WTC11 (cell line): ENCODE measurements at regions of chr11 and their contacts with region 1.

Region 1: GRCh38 chr11:72030472-72031045 is 31.9 kb downstream of the IL18BP start:
- DNase-seq: no peak
- ATAC-seq: no peak
- H3K4me3 Mint-ChIP-seq: no peak overlapping the region
- H3K27ac Mint-ChIP-seq: no peak overlapping the region
- H3K4me1 Mint-ChIP-seq: peaks cover 2% of the 10 kb centered on the region; the same call in 1 of the 2 replicates
- H3K27me3 Mint-ChIP-seq: no peaks in the 10 kb centered on the region
- CTCF ChIP-seq: no peak

Region 2: GRCh38 chr11:71908218-71908617 is 122.3 kb before region 1 on chr11:
- CTCF ChIA-PET with region 1: no interaction called
- POLR2A ChIA-PET with region 1: no interaction called
- DNase-seq: no peak
- ATAC-seq: no peak
- H3K4me3 Mint-ChIP-seq: no peak overlapping the region
- H3K27ac Mint-ChIP-seq: no peak overlapping the region
- H3K4me1 Mint-ChIP-seq: peaks cover 2% of the 10 kb centered on the region; the same call in 1 of the 2 replicates
- H3K27me3 Mint-ChIP-seq: no peaks in the 10 kb centered on the region
- CTCF ChIP-seq: no peak

Region 3: DNA sequence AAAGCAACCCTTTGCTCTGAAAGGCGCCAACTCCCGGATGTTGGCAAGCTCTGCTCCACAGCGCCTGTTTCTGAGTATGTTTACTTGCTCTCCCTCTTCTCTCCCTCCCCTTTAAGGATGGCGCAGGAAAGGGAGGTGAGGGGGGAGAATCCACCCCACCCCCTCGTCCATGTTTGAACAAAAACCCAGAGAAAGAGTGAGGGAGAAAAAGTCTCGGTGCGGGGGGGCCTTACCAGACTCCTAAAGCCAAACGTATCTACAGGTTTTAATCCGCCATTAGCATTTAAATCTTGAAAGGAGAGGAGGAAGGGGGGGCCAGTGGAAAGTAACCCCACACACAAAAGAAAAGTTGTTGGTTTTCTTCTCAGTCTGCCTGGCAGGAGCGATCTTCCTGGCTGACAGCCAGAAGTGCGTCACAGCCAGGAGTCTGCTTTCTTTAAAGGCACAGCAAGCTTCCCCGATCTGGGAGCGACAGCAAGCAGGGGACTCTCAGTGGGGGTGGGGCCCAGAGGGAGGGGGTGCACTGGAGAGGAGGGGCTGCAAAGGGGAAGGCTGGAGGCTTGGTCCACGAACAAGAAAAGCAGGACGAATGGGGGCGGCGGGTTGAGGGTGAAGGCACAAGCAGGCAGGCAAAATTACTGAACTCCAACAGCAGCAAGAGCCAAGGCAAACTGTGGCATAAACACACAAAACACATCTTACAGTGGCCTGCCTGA is 10.3 kb after region 1 on chr11:
- CTCF ChIA-PET with region 1: interaction called, 81 read pairs
- POLR2A ChIA-PET with region 1: no interaction called
- DNase-seq: peak; percentile 71
- ATAC-seq: peak; percentile 60
- H3K4me3 Mint-ChIP-seq: no peak overlapping the region
- H3K27ac Mint-ChIP-seq: no peak overlapping the region
- H3K4me1 Mint-ChIP-seq: peaks cover 33% of the 10 kb centered on the region
- H3K27me3 Mint-ChIP-seq: no peaks in the 10 kb centered on the region; the same call in 1 of the 2 replicates
- CTCF ChIP-seq: no peak

Region 4: GRCh38 chr11:72069787-72070251 is 39.3 kb after region 1 on chr11:
- CTCF ChIA-PET with region 1: interaction called, 28 read pairs
- POLR2A ChIA-PET with region 1: no interaction called
- DNase-seq: no peak
- ATAC-seq: peak; percentile 78
- H3K4me3 Mint-ChIP-seq: no peak overlapping the region
- H3K27ac Mint-ChIP-seq: peak overlapping the region; percentile 39
- H3K4me1 Mint-ChIP-seq: peaks cover 37% of the 10 kb centered on the region
- H3K27me3 Mint-ChIP-seq: no peaks in the 10 kb centered on the region
- CTCF ChIP-seq: no peak

Region 5: GRCh38 chr11:72080256-72080974 is 49.9 kb after region 1 on chr11 and contains the starts of genes LRRC51 and NUMA1:
- CTCF ChIA-PET with region 1: interaction called, 31 read pairs
- POLR2A ChIA-PET with region 1: interaction called, 4 read pairs
- DNase-seq: peak; percentile 100
- ATAC-seq: peak; percentile 94
- H3K4me3 Mint-ChIP-seq: peak within 1 kb of the TSS; percentile 84
- H3K27ac Mint-ChIP-seq: peak within 1 kb of the TSS; percentile 100
- H3K4me1 Mint-ChIP-seq: peaks cover 18% of the 10 kb centered on the region
- H3K27me3 Mint-ChIP-seq: no peaks in the 10 kb centered on the region
- CTCF ChIP-seq: no peak
- total RNA-seq, gene LRRC51: 5.3 to 5.6 TPM (median 5.3 TPM) in 3 replicates
- total RNA-seq, gene NUMA1: 117 to 147 TPM (median 118 TPM) in 3 replicates

Region 6: DNA sequence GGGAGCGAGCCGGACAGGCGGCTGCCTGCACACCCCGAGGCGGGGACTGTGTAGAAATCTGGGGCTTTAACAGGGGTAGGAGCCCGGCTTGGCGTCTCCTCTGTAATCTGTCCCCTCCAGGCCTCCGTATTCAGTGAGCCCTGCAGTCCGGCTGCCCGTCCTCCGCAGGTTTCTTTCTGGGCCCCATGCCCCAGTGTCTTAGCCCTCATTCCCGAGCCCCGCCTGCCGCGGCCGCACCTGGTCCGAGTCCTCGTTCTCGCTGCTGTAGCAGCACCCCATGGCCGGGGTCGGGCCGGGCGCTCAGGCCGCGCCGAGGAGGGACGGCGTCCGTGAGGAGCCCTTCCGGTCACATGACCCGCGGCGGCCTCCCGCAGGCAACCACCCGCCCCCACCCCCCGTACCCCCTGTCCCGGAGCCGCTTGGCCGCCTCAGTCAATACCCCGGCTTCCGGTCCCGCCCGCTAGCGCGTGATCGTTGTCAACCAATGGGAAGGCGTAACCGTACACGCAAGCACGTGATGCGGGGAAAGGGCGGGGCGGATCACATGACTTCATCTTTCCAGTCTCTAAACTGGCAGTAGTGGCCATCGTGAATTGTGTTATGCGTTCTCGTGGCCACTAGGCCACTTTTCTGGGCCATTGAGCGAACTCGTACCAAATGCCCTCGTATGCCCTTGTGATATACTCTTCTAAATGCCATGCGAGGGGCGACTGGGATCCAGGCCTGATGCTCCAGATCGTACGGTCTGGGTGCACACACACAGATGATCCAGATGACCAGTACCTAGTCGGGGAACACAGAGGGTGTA is 72.6 kb after region 1 on chr11 and contains the start of gene LAMTOR1:
- CTCF ChIA-PET with region 1: interaction called, 10 read pairs
- POLR2A ChIA-PET with region 1: no interaction called
- DNase-seq: peak; percentile 99
- ATAC-seq: peak; percentile 93
- H3K4me3 Mint-ChIP-seq: peak within 1 kb of the TSS; percentile 95
- H3K27ac Mint-ChIP-seq: peak within 1 kb of the TSS; percentile 98
- H3K4me1 Mint-ChIP-seq: peaks cover 27% of the 10 kb centered on the region
- H3K27me3 Mint-ChIP-seq: no peaks in the 10 kb centered on the region
- CTCF ChIP-seq: no peak
- total RNA-seq, gene LAMTOR1: 79.4 to 84.3 TPM (median 80.4 TPM) in 3 replicates

Region 7: GRCh38 chr11:72189461-72190275 is 159.1 kb after region 1 on chr11:
- CTCF ChIA-PET with region 1: interaction called, 30 read pairs
- POLR2A ChIA-PET with region 1: no interaction called
- DNase-seq: no peak
- ATAC-seq: peak; percentile 46
- H3K4me3 Mint-ChIP-seq: no peak overlapping the region
- H3K27ac Mint-ChIP-seq: no peak overlapping the region
- H3K4me1 Mint-ChIP-seq: peaks cover 8% of the 10 kb centered on the region
- H3K27me3 Mint-ChIP-seq: peaks cover 2% of the 10 kb centered on the region; the same call in 1 of the 2 replicates
- CTCF ChIP-seq: no peak

Region 8: GRCh38 chr11:72546866-72547265 is 516.3 kb after region 1 on chr11:
- CTCF ChIA-PET with region 1: no interaction called
- POLR2A ChIA-PET with region 1: no interaction called
- DNase-seq: no peak
- ATAC-seq: no peak
- H3K4me3 Mint-ChIP-seq: no peak overlapping the region
- H3K27ac Mint-ChIP-seq: no peak overlapping the region
- H3K4me1 Mint-ChIP-seq: no peaks in the 10 kb centered on the region
- H3K27me3 Mint-ChIP-seq: peaks cover 8% of the 10 kb centered on the region
- CTCF ChIP-seq: no peak